ENCODE measurements at regions of chr2 and their contacts with region 1.

Region 1: GRCh38 chr2:207337234-207338219 is 171.8 kb upstream of the KLF7 start:
- DNase-seq: no peak
- CTCF ChIP-seq: no peak

Region 2: GRCh38 chr2:207073801-207074678 is 263.5 kb before region 1 on chr2:
- CTCF ChIA-PET with region 1: no interaction called
- POLR2A ChIA-PET with region 1: no interaction called
- DNase-seq: peak; percentile 24
- CTCF ChIP-seq: no peak

Region 3: DNA sequence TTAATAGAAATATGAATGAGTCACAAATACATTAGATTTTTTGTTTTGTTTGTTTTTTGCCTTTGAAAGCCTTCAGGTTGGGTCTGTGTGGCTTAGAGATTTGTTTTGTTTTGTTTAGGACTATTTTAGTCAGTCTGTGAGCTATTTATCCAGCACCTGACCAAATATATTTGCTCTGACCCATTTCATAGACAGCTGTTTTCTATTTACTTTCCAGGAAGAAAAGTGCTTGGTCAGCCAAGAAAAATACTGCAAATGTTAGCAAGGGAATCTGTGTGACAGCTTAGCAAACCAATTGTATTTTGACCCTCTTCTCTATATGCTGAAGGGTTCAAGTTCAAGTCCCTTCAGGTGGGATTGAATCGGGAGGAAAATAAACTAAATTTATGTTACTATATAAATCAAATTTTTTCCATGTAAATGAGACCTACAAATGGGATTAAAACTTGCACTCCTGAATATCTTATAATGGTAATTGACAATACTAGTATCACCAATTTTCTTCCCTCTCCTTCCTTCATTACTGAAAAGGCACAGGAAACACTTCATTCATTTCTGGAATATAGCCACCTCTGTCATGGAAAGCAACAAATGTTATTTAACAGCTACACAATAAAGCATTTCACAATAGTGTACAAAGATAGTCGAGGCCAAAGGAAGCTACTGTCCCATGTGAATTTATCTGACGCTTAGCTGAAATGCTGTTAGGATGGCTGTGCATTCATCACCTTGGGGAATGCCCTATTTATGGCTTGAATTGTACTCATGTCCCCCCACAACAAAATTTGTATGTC is 148.7 kb before region 1 on chr2:
- CTCF ChIA-PET with region 1: no interaction called
- POLR2A ChIA-PET with region 1: no interaction called
- DNase-seq: no peak
- CTCF ChIP-seq: no peak

Region 4: GRCh38 chr2:207352978-207353671 is 15.6 kb after region 1 on chr2:
- CTCF ChIA-PET with region 1: interaction called, 25 read pairs
- POLR2A ChIA-PET with region 1: no interaction called
- DNase-seq: peak; percentile 31
- CTCF ChIP-seq: peak; percentile 30